B cell (primary cell): ENCODE measurements at regions of chr1 and their contacts with region 1.

Region 1: GRCh38 chr1:40476924-40477677 is at the start of gene ZFP69:
- DNase-seq: peak; percentile 83
- ATAC-seq: peak; percentile 95
- H3K4me3 ChIP-seq: peak within 1 kb of the TSS; percentile 58 to 83 (median 81)
- H3K4me3 Mint-ChIP-seq: peak within 1 kb of the TSS; percentile 93
- H3K27ac ChIP-seq: peak within 1 kb of the TSS; percentile 37 to 63
- H3K27ac Mint-ChIP-seq: peak within 1 kb of the TSS; percentile 87
- H3K4me1 ChIP-seq: peaks cover 8 to 14% of the 10 kb centered on the region in 2 donors
- H3K4me1 Mint-ChIP-seq: peaks cover 18% of the 10 kb centered on the region
- H3K27me3 ChIP-seq: no peaks in the 10 kb centered on the region
- H3K27me3 Mint-ChIP-seq: no peaks in the 10 kb centered on the region
- CTCF ChIP-seq: no peak
- total RNA-seq, gene ZFP69: 7.5 TPM in 2 replicates

Region 2: GRCh38 chr1:40432644-40433390 is 44.3 kb before region 1 on chr1:
- CTCF ChIA-PET with region 1: no interaction called
- POLR2A ChIA-PET with region 1: no interaction called
- intact Hi-C with region 1: no loop called
- DNase-seq: no peak
- ATAC-seq: no peak
- H3K4me3 ChIP-seq: no peak overlapping the region
- H3K4me3 Mint-ChIP-seq: no peak overlapping the region
- H3K27ac ChIP-seq: no peak overlapping the region
- H3K27ac Mint-ChIP-seq: no peak overlapping the region
- H3K4me1 ChIP-seq: no peaks in the 10 kb centered on the region
- H3K4me1 Mint-ChIP-seq: no peaks in the 10 kb centered on the region
- H3K27me3 ChIP-seq: no peaks in the 10 kb centered on the region
- H3K27me3 Mint-ChIP-seq: no peaks in the 10 kb centered on the region
- CTCF ChIP-seq: no peak

Region 3: GRCh38 chr1:40449684-40450494 is 27.2 kb before region 1 on chr1 and contains the start of gene ZFP69B:
- CTCF ChIA-PET with region 1: interaction called, 3 read pairs
- POLR2A ChIA-PET with region 1: interaction called, 4 read pairs
- intact Hi-C with region 1: loop called (anchors 2 kb)
- DNase-seq: peak; percentile 92
- ATAC-seq: peak; percentile 81
- H3K4me3 ChIP-seq: peak within 1 kb of the TSS; percentile 62 to 79 (median 76)
- H3K4me3 Mint-ChIP-seq: peak within 1 kb of the TSS; percentile 96
- H3K27ac ChIP-seq: peak within 1 kb of the TSS in 1 of 2 donors; percentile 60
- H3K27ac Mint-ChIP-seq: peak within 1 kb of the TSS; percentile 93
- H3K4me1 ChIP-seq: peaks cover 14 to 17% of the 10 kb centered on the region in 2 donors
- H3K4me1 Mint-ChIP-seq: peaks cover 27% of the 10 kb centered on the region
- H3K27me3 ChIP-seq: no peaks in the 10 kb centered on the region
- H3K27me3 Mint-ChIP-seq: no peaks in the 10 kb centered on the region
- CTCF ChIP-seq: no peak
- total RNA-seq, gene ZFP69B: 10.8 and 11.8 TPM in 2 replicates

Region 4: DNA sequence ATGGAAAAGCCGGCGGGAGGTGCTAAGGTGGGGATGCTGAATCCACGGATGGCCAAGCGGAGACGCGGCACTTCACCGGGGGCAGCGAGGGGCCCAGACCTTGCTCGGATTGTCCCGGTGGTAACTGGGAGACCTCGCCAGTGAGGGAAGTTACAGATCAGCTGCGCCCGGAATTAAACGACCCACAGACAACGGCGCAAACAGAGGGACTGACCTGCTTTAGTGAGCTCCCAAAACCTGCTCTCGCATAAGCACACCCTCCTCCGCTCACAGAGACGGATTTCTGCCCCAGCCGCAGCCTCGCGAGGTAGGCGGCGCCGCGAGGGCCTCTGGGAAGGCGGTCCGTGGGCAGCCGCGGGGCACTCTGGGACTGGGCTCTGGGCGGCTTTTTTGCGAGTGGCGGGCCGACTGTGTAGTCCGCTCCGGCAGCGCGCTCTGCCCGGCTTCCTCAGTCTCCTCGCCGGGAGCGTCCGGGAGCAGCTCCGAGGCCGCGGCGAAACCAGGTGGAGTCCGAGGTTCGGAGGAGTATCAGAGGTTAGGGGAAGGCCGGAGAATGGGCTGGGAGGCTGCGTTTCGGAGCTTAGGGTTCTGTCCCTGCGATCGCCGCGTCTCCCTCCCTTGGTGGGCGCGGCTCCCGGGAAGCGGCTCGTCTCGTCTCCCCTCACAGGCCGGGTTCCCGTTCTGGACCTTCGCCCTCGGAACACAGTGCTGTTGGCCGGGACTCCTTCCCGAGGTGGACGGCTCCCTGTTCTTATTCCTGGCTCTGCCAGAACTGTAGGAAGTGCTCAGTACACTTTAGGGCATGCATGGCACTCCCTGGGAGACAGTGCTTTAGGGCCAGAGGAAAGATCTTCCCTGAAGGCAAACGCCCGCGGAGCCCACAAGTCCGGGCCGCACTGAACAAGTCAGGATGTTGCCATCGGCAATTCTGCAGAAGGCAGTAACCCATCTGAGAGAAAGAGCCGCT is 31.6 kb after region 1 on chr1 and contains the start of gene EXO5:
- CTCF ChIA-PET with region 1: no interaction called
- POLR2A ChIA-PET with region 1: no interaction called
- intact Hi-C with region 1: loop called (anchors 1 kb)
- DNase-seq: peak; percentile 83
- ATAC-seq: peak; percentile 98
- H3K4me3 ChIP-seq: peak within 1 kb of the TSS; percentile 68 to 94 (median 88)
- H3K4me3 Mint-ChIP-seq: peak within 1 kb of the TSS; percentile 93
- H3K27ac ChIP-seq: peak within 1 kb of the TSS; percentile 52 to 53
- H3K27ac Mint-ChIP-seq: peak within 1 kb of the TSS; percentile 85
- H3K4me1 ChIP-seq: peaks cover 6 to 16% of the 10 kb centered on the region in 2 donors
- H3K4me1 Mint-ChIP-seq: peaks cover 20% of the 10 kb centered on the region
- H3K27me3 ChIP-seq: no peaks in the 10 kb centered on the region
- H3K27me3 Mint-ChIP-seq: no peaks in the 10 kb centered on the region
- CTCF ChIP-seq: no peak
- total RNA-seq, gene EXO5: 13.9 and 16.9 TPM in 2 replicates